Body of pancreas (tissue), 4 donors: ENCODE measurements at regions of chr18 and their contacts with region 1.

Region 1: GRCh38 chr18:43563780-43564179 is 286.5 kb upstream of the SYT4 start:
- DNase-seq: peak; percentile 36 to 56 (median 48)
- ATAC-seq: peak; percentile 79
- H3K4me3 ChIP-seq: no peak overlapping the region
- H3K27ac ChIP-seq: no peak overlapping the region
- H3K4me1 ChIP-seq: peaks cover 7% of the 10 kb centered on the region
- H3K27me3 ChIP-seq: no peaks in the 10 kb centered on the region
- CTCF ChIP-seq: peak in 6 of 7 experiments; percentile 31 to 83 (median 71)
- POLR2A ChIP-seq: no peak

Region 2: DNA sequence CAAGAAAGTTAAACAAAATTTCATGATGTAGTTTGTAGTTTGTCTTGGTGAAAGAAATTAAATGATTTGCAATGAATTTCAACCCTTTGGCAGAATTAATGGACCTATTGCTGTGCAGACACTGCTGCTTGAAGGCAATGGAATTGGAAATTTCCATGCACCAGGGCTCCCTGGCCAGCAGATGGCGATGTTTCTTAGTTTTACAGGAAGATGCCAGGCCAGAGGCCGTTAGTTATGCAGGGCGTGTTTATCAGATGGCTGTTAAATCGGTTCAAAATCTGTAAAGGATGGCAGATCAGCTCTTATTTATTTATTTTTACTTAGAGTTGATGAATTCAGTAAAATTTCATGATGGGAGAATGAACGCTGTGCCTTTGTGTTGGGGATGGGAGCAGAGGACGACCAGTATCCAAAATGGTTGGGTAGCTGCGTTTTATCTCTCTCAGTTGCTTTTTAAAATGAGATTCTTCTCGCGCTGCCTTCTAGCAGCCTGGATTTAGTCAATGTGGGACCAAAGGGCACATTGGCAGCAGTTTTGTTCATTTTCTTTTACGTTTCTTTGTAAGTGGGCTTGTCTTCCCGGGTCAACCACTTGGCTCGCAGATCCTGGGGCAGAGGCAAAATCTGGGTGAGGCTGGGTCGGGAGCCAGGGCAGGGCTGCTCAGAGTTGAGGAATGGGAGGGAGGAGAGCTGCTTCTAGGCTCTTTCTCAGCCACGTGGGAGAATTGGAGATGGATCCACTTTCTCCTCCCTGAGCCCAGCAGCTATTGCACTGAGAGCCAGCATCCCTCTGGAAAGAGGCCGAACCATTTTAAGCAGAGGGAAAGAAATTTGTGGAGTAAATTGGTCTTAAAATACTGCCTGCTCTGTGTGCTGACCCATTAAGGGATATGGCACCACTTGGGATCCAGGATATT is 1264.8 kb before region 1 on chr18:
- intact Hi-C with region 1: loop called (anchors 5 kb)
- DNase-seq: peak; percentile 66 to 77 (median 70)
- ATAC-seq: peak; percentile 74
- H3K4me3 ChIP-seq: no peak overlapping the region
- H3K27ac ChIP-seq: no peak overlapping the region
- H3K4me1 ChIP-seq: no peaks in the 10 kb centered on the region
- H3K27me3 ChIP-seq: no peaks in the 10 kb centered on the region
- CTCF ChIP-seq: peak; percentile 55 to 91 (median 71)
- POLR2A ChIP-seq: no peak